GM12878 (cell line): ENCODE measurements at regions of chr11 and their contacts with region 1.

Region 1: GRCh38 chr11:134050541-134051383 is 18.1 kb upstream of the JAM3 start:
- DNase-seq: no peak
- ATAC-seq: peak; percentile 99
- H3K4me3 ChIP-seq: no peak overlapping the region
- H3K27ac ChIP-seq: no peak overlapping the region
- H3K4me1 ChIP-seq: no peaks in the 10 kb centered on the region
- H3K27me3 ChIP-seq: no peaks in the 10 kb centered on the region; a peak in 1 of 4 replicates
- CTCF ChIP-seq: peak; percentile 84 to 88 (median 87)
- EP300 ChIP-seq: no peak
- POLR2A ChIP-seq: no peak
- RAD21 ChIP-seq: peak; percentile 69

Region 2: GRCh38 chr11:133927690-133928627 is 122.8 kb before region 1 on chr11:
- CTCF ChIA-PET with region 1: interaction called, 5 read pairs
- POLR2A ChIA-PET with region 1: no interaction called
- RAD21 ChIA-PET with region 1: interaction called, 10 read pairs
- SMC1A ChIA-PET with region 1: interaction called, 5 read pairs
- in situ Hi-C with region 1: no loop called
- intact Hi-C with region 1: loop called (anchors 5 kb)
- DNase-seq: no peak
- ATAC-seq: peak; percentile 91
- H3K4me3 ChIP-seq: no peak overlapping the region
- H3K27ac ChIP-seq: no peak overlapping the region
- H3K4me1 ChIP-seq: peaks cover 12% of the 10 kb centered on the region
- H3K27me3 ChIP-seq: no peaks in the 10 kb centered on the region
- CTCF ChIP-seq: peak; percentile 94 to 95 (median 95)
- EP300 ChIP-seq: no peak
- POLR2A ChIP-seq: no peak
- RAD21 ChIP-seq: peak; percentile 79

Region 3: DNA sequence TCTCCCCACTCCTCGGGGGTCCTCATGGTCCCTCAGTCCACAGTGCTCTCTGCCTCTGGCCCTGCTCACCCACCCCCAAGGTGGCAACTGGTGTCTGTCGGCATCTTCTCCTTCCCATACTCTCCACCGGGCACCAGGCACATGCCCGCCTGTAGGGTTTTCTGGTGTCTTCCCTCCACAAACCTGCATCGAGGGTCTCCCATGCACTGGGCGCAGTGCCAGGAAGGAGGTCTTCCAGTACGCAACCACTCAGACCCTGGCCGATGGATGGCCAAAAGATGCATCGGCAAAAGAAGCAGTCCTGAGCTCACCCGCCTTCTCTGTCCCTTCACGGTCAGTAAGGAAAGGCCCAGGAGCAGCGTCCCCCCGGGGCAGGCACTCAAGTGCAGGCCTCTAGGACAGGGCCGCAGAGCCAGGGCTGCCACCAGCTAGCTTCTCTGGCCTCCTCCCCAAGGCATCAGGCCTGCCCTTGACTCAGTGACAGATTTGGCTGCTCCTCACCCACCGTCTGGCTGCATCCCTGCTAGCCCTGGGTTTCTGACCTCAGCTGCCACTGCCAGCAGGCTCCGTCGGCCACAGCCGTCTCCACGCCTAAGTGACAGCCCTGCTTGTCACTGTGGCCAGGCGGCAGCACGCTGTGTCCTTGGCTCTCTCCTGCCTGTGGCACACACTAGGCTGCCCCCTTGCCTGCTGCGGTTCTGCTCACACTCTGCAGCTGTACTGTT is 61.9 kb before region 1 on chr11:
- CTCF ChIA-PET with region 1: no interaction called
- POLR2A ChIA-PET with region 1: no interaction called
- RAD21 ChIA-PET with region 1: no interaction called
- SMC1A ChIA-PET with region 1: no interaction called
- in situ Hi-C with region 1: no loop called
- intact Hi-C with region 1: no loop called
- DNase-seq: no peak
- ATAC-seq: no peak
- H3K4me3 ChIP-seq: no peak overlapping the region
- H3K27ac ChIP-seq: no peak overlapping the region
- H3K4me1 ChIP-seq: peaks cover 13% of the 10 kb centered on the region
- H3K27me3 ChIP-seq: peaks cover 0 to 1% of the 10 kb centered on the region in 2 experiments; a peak in 1 of 4 replicates
- CTCF ChIP-seq: no peak
- EP300 ChIP-seq: no peak
- POLR2A ChIP-seq: no peak
- RAD21 ChIP-seq: no peak

Region 4: GRCh38 chr11:134040386-134041302 is 10.1 kb before region 1 on chr11:
- CTCF ChIA-PET with region 1: interaction called, 15 read pairs
- POLR2A ChIA-PET with region 1: no interaction called
- RAD21 ChIA-PET with region 1: interaction called, 5 read pairs
- SMC1A ChIA-PET with region 1: interaction called, 4 read pairs
- in situ Hi-C with region 1: no loop called
- intact Hi-C with region 1: no loop called
- DNase-seq: no peak
- ATAC-seq: no peak
- H3K4me3 ChIP-seq: no peak overlapping the region
- H3K27ac ChIP-seq: no peak overlapping the region
- H3K4me1 ChIP-seq: peaks cover 4% of the 10 kb centered on the region; the same call in 1 of the 2 replicates
- H3K27me3 ChIP-seq: no peaks in the 10 kb centered on the region; a peak in 2 of 4 replicates
- CTCF ChIP-seq: no peak
- EP300 ChIP-seq: no peak
- POLR2A ChIP-seq: no peak
- RAD21 ChIP-seq: no peak

Region 5: DNA sequence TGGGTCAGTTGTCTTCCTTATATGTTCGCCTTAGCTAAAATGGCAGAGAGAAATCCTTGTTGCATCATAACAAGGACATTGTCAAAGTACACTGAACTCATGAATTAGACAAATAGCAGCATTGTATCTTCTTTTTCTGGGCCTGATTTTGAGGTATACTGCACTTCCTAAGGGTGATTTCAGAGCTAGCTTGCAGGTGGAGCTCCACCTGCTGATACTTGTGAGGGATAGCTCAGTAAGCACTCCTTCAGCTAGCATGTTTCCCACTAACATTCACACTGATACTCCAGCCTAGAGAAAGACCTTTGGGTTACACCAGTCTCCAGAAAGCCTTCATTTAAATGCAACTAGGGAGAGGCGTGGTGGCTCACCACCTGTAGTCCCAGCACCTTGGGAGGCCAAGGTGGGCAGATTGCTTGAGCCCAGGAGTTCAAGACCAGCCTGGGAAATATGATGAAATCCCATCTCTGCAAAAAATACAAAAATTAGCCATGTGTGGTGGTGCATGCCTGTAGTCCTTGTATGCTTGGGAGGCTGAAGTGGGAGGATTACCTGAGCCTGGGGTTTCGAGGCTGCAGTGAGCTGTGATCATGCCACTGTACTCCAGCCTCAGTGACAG is 47.9 kb after region 1 on chr11:
- CTCF ChIA-PET with region 1: interaction called, 17 read pairs
- POLR2A ChIA-PET with region 1: no interaction called
- RAD21 ChIA-PET with region 1: interaction called, 11 read pairs
- SMC1A ChIA-PET with region 1: no interaction called
- in situ Hi-C with region 1: no loop called
- intact Hi-C with region 1: loop called (anchors 1 kb)
- DNase-seq: no peak
- ATAC-seq: peak; percentile 61
- H3K4me3 ChIP-seq: no peak overlapping the region
- H3K27ac ChIP-seq: no peak overlapping the region
- H3K4me1 ChIP-seq: no peaks in the 10 kb centered on the region
- H3K27me3 ChIP-seq: no peaks in the 10 kb centered on the region
- CTCF ChIP-seq: peak; percentile 44 to 49 (median 44); a peak in 4 of 6 replicates
- EP300 ChIP-seq: no peak
- POLR2A ChIP-seq: no peak
- RAD21 ChIP-seq: peak; percentile 33; the same call in 1 of the 2 replicates

Region 6: DNA sequence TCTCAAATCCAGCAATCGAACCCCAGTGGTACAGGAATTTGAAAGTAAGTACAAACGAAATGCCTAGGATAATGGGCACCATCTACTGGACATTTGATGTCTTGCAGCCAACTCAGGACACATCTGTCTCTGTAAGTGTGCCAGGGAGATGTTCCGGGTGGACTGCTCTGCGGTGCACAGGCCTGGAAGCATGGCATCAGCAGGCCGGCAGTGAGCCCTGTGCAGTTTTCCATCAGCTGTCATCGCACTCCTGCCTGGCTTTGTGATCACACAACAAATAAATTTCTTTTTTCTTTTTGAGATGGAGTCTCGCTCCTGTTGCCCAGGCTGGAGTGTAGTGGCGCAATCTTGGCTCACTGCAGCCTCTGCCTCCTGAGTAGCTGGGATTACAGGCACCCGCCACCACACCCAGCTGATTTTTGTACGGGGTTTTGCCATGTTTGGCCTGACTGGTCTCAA is 89.1 kb after region 1 on chr11:
- CTCF ChIA-PET with region 1: interaction called, 13 read pairs
- POLR2A ChIA-PET with region 1: no interaction called
- RAD21 ChIA-PET with region 1: interaction called, 3 read pairs
- SMC1A ChIA-PET with region 1: interaction called, 3 read pairs
- in situ Hi-C with region 1: loop called (anchors 5 kb)
- intact Hi-C with region 1: loop called (anchors 1 kb)
- DNase-seq: peak; percentile 25
- ATAC-seq: peak; percentile 93
- H3K4me3 ChIP-seq: no peak overlapping the region
- H3K27ac ChIP-seq: no peak overlapping the region
- H3K4me1 ChIP-seq: no peaks in the 10 kb centered on the region
- H3K27me3 ChIP-seq: no peaks in the 10 kb centered on the region
- CTCF ChIP-seq: peak; percentile 70 to 77 (median 72)
- EP300 ChIP-seq: no peak
- POLR2A ChIP-seq: no peak
- RAD21 ChIP-seq: peak; percentile 65